ENCODE measurements at regions of chr5 and their contacts with region 1.

Region 1: GRCh38 chr5:159262859-159263567 is at the start of gene UBLCP1:
- DNase-seq: peak; percentile 92
- total RNA-seq, gene UBLCP1: 15.9 TPM

Region 2: DNA sequence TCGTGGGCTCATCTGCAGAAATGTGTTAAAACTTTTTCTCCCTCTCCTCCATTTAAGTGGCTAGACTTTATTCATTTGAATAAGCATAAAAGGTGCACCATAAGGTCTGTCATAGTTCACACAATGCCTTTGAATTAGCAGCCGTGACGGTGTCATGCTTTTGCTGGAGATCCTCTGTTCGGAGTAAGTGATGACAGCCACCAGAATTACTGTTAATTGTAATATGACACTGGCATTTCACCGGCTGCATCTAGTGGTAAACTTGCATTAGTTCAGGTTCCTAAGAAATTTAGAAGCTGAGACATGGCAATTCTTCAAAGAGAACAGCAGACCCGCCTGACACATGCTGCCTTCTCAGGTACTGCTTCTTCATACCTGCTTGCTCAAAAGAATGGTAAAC is 405.0 kb before region 1 on chr5:
- intact Hi-C with region 1: no loop called
- DNase-seq: no peak

Region 3: GRCh38 chr5:159100025-159100781 is 162.8 kb before region 1 on chr5:
- intact Hi-C with region 1: no loop called
- DNase-seq: peak; percentile 96

Region 4: GRCh38 chr5:159156426-159157238 is 106.4 kb before region 1 on chr5:
- intact Hi-C with region 1: loop called (anchors 5 kb)
- DNase-seq: no peak

Region 5: GRCh38 chr5:159178978-159179377 is 84.0 kb before region 1 on chr5:
- intact Hi-C with region 1: loop called (anchors 5 kb)
- DNase-seq: no peak

Region 6: GRCh38 chr5:159209438-159210305 is 53.3 kb before region 1 on chr5 and contains the start of gene RNF145:
- intact Hi-C with region 1: loop called (anchors 1 kb)
- DNase-seq: peak; percentile 93
- total RNA-seq, gene RNF145: 25.4 TPM

Region 7: GRCh38 chr5:159220206-159220605 is 42.8 kb before region 1 on chr5:
- intact Hi-C with region 1: no loop called
- DNase-seq: no peak

Region 8: GRCh38 chr5:159324102-159324760 is 61.2 kb after region 1 on chr5:
- intact Hi-C with region 1: no loop called
- DNase-seq: no peak